OCI-LY7 (cell line): ENCODE measurements at regions of chr1 and their contacts with region 1.

Region 1: GRCh38 chr1:167599957-167600581 is 30.0 kb upstream of the RCSD1 start:
- DNase-seq: peak; percentile 80
- H3K4me3 ChIP-seq: peak overlapping the region; percentile 10
- H3K27ac ChIP-seq: peak overlapping the region; percentile 79
- H3K4me1 ChIP-seq: peaks cover 40% of the 10 kb centered on the region
- CTCF ChIP-seq: peak; percentile 97

Region 2: GRCh38 chr1:167220537-167221125 is 379.4 kb before region 1 on chr1 and contains the start of gene POU2F1:
- CTCF ChIA-PET with region 1: no interaction called
- POLR2A ChIA-PET with region 1: no interaction called
- intact Hi-C with region 1: loop called (anchors 5 kb)
- DNase-seq: peak; percentile 98
- H3K4me3 ChIP-seq: peak within 1 kb of the TSS; percentile 82
- H3K27ac ChIP-seq: peak within 1 kb of the TSS; percentile 94
- H3K4me1 ChIP-seq: peaks cover 29% of the 10 kb centered on the region
- CTCF ChIP-seq: peak; percentile 79
- total RNA-seq, gene POU2F1: 18.7 and 21.2 TPM in 2 replicates

Region 3: DNA sequence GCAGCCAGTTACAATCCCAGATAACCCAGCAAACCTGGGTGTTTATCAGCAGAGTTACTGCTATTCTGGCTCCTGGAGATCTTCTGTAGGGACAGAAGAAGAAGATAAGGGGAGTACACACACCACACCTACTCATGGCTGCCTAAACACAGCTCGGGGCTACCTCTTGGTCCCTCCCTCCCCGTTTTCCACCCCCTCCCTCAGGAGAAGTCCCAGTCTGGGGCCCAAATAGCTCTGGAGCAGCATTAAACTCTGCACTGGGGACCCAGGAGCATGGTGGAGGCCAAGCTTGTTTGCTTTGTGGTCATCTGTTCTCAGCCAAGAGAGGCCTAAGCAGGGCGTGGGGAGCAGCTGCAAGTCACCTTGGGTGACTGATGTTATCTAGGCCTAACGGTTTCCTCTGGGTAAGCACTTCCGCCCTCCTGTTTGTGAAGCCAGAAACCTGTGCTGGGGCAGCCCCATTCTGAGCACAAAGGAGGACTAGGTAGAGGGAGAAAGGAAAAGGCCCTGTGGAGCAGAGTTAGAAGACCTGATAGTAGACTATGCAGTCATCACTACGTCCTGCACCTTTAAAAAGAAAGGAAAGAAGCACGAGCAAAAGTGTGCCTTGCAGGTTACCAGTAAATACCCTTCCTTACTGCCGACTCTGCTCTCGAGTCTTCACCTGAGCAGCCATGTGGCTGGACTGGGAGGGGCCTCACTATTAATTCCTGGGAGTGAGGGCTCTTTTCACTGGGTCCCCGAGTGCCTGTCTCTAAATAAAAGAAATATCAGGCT is 28.0 kb after region 1 on chr1:
- CTCF ChIA-PET with region 1: interaction called, 3 read pairs
- POLR2A ChIA-PET with region 1: interaction called, 34 read pairs
- intact Hi-C with region 1: loop called (anchors 1 kb)
- DNase-seq: peak; percentile 96
- H3K4me3 ChIP-seq: peak overlapping the region; percentile 93
- H3K27ac ChIP-seq: peak overlapping the region; percentile 99
- H3K4me1 ChIP-seq: peaks cover 82% of the 10 kb centered on the region
- CTCF ChIP-seq: no peak

Region 4: DNA sequence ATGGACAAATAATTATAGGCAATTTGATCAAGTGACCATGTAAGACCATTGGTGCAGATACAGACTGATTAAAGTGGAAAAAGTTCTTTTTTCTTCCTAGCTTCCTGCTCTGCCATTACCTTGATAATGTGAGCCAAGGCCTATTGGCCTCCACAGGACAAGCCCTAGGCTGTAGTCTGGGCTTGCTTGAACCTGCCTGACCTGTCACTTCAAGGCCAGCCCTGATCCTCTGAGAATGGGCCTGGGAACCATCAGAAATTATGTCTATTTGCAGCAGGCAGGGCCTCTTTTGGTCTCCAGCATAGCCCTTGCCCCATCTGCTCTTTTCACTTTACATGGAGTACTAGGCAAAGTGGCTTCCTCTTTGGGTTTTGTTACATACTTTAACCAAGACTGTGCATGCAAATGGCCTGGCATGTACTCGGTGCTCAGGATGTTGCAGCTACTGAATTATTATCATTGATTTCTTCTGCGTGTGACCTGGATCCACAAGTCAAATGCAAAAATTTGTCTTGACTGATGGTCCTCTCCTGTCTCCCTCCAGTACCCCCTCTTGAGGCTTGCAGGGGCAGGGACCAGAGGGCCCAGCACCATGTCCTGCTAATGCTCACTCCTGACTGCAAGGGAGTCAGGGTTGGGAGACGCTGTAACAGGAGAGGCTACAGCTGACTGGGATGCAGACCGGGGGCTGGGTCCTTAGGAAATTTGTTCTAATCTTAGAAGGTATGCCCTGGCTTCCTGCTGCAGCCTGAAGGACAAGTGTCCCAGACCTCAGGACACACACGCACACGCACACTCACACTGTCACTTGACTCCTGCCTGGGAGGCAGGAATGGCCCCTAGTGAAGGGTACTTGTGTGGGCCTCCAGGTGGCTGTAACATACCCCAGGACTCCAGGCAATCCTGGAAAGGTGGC is 69.4 kb after region 1 on chr1:
- CTCF ChIA-PET with region 1: interaction called, 3 read pairs
- POLR2A ChIA-PET with region 1: interaction called, 11 read pairs
- intact Hi-C with region 1: no loop called
- DNase-seq: peak; percentile 69
- H3K4me3 ChIP-seq: peak overlapping the region; percentile 43
- H3K27ac ChIP-seq: peak overlapping the region; percentile 58
- H3K4me1 ChIP-seq: peaks cover 57% of the 10 kb centered on the region
- CTCF ChIP-seq: no peak

Region 5: DNA sequence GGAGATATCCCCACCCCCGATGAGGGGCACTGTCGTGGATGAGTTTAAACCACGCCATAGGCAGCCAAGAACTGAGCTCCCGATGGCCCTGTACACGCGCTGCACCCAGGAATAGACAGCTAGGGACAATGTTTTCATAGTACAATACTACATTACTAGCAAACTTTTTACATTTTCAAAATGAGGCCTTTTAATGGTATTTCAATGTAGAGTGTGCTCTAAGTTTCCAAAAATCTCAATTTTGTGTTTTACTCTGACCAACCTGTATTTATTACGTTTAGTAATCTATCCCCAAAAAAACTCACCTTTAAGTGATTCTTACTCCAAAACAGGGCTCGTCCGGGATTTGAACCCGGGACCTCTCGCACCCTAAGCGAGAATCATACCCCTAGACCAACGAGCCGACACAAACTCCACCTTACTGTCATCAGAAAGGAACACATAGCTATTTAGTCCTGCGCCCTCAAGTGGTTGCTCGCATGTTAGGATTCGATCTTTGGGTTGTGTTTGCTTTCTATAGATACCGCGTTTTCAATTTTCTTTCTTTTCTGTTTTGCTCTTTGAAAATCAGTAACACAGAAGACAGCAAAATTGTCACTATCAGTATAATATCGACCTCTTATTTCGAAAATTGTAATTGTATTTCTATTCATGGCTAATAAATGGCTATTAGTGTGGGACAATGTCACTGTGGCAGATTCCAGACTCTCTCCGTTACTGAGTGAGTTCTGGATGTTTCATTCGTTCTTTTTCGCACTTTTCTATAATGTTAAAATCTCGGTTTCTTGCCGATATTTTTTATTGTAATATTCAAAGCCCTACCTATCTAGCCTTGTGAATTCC is 115.3 kb after region 1 on chr1:
- CTCF ChIA-PET with region 1: interaction called, 6 read pairs
- POLR2A ChIA-PET with region 1: interaction called, 4 read pairs
- intact Hi-C with region 1: loop called (anchors 1 kb)
- DNase-seq: peak; percentile 94
- H3K4me3 ChIP-seq: peak overlapping the region; percentile 75
- H3K27ac ChIP-seq: peak overlapping the region; percentile 73
- H3K4me1 ChIP-seq: peaks cover 47% of the 10 kb centered on the region
- CTCF ChIP-seq: peak; percentile 94